Activated CD8-positive, alpha-beta T cell treated with anti-CD3 and anti-CD28 coated beads for 36 hours (primary cell): ENCODE measurements at regions of chr20 and their contacts with region 1.

Region 1: DNA sequence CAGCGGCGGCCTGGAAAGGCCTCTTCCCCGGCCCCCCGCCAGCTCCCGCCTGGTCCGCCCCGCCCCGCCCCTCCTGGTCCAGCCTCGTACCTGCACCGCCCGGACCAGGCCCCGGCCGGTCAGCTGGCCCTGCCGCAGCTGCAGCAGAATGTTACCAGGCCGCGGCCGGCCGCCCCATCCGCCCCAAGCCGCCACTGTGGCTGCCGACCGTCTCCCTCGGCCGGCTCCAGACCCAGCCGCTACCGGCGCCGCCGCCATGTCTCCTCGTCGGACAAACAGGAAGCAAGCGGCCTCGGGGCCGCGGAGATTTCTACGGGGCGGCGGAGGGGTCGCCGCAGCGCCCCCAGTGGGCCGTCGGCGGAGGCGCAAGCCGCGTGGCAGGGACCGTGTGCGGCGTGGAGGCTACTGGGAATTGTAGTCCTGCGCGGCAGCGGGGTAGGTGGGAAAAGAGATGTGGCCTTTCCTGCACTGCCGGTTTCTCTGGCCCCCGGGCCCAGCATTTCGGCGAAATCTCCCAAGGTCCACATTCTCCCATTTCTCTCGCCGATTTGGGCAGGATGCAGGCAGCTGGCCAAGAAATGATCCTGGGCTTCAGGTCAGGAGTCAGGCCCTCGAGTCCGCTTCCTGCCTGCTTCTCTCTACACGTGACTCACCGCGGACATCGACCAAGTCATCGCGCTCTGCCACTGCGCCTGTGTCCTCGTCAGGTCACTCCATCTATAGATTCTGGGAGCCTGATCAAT is at the start of gene TRPC4AP:
- DNase-seq: peak; percentile 90
- ATAC-seq: peak; percentile 94
- H3K4me3 Mint-ChIP-seq: peak within 1 kb of the TSS; percentile 84
- H3K27ac Mint-ChIP-seq: peak within 1 kb of the TSS; percentile 99
- H3K4me1 Mint-ChIP-seq: peaks cover 50% of the 10 kb centered on the region
- H3K27me3 Mint-ChIP-seq: no peaks in the 10 kb centered on the region
- CTCF ChIP-seq: peak; percentile 90
- total RNA-seq, gene TRPC4AP: 34.2 to 38.2 TPM

Region 2: GRCh38 chr20:35034145-35034544 is 58.5 kb before region 1 on chr20:
- CTCF ChIA-PET with region 1: interaction called, 13 read pairs
- POLR2A ChIA-PET with region 1: no interaction called
- intact Hi-C with region 1: no loop called
- DNase-seq: no peak
- ATAC-seq: no peak
- H3K4me3 Mint-ChIP-seq: no peak overlapping the region
- H3K27ac Mint-ChIP-seq: no peak overlapping the region
- H3K4me1 Mint-ChIP-seq: no peaks in the 10 kb centered on the region
- H3K27me3 Mint-ChIP-seq: no peaks in the 10 kb centered on the region
- CTCF ChIP-seq: no peak

Region 3: DNA sequence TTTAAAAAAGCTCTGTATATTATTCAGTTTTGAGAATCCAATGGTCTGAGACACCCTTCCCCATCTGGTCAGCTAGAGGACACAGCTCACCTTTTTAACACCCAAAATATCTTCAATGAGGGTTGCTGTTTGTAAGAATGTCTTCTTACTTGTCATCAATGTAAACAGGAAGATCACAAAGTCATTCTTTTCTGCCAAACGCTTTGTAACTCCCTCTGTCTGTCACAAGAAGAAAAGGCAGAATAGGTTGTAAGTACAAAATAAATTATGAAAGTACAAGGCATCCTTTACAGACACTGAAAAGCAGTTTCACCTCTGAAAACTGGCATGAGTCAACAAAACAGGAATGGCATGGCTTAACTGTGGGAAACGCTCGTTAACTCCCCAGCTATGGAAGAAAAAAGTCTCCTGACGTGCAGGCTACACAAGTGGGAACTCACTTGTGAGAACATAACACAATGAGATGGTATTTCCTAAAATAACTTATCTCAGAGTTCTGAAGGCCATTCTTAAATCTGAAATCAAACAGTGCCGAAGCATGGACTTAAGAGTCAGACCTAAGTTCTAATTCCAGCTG is 42.8 kb before region 1 on chr20:
- CTCF ChIA-PET with region 1: interaction called, 7 read pairs
- POLR2A ChIA-PET with region 1: interaction called, 11 read pairs
- intact Hi-C with region 1: no loop called
- DNase-seq: no peak
- ATAC-seq: no peak
- H3K4me3 Mint-ChIP-seq: no peak overlapping the region
- H3K27ac Mint-ChIP-seq: no peak overlapping the region
- H3K4me1 Mint-ChIP-seq: peaks cover 6% of the 10 kb centered on the region
- H3K27me3 Mint-ChIP-seq: no peaks in the 10 kb centered on the region
- CTCF ChIP-seq: no peak

Region 4: DNA sequence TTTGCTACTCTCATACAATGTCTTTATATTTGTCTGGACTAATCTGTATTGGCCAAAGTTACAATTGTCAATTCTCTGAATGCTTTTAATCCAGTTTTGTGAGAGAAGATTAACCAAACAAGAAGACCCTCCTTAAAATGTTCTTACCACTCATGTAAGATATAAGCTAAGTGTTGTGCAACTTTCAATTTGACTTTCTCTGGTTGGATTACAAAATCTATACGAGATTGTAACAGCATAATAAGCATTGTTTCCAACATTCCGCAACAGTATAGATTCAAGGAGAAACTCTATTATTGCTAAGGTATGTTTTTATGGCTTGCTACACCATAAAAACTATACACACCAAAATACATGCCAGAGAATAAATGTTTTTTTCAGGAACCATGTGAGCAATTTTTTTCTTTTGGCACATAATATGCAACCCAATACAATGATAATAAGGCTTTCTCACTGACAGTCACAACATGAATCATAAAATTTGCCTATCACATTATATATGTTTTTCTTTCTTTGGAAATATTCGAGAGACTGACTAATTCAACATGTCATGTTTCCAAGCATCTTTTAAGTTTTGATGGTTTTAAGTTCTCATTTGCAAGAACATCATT is 12.1 kb after region 1 on chr20:
- CTCF ChIA-PET with region 1: interaction called, 17 read pairs
- POLR2A ChIA-PET with region 1: no interaction called
- intact Hi-C with region 1: no loop called
- DNase-seq: no peak
- ATAC-seq: no peak
- H3K4me3 Mint-ChIP-seq: no peak overlapping the region
- H3K27ac Mint-ChIP-seq: no peak overlapping the region
- H3K4me1 Mint-ChIP-seq: no peaks in the 10 kb centered on the region
- H3K27me3 Mint-ChIP-seq: no peaks in the 10 kb centered on the region
- CTCF ChIP-seq: no peak

Region 5: DNA sequence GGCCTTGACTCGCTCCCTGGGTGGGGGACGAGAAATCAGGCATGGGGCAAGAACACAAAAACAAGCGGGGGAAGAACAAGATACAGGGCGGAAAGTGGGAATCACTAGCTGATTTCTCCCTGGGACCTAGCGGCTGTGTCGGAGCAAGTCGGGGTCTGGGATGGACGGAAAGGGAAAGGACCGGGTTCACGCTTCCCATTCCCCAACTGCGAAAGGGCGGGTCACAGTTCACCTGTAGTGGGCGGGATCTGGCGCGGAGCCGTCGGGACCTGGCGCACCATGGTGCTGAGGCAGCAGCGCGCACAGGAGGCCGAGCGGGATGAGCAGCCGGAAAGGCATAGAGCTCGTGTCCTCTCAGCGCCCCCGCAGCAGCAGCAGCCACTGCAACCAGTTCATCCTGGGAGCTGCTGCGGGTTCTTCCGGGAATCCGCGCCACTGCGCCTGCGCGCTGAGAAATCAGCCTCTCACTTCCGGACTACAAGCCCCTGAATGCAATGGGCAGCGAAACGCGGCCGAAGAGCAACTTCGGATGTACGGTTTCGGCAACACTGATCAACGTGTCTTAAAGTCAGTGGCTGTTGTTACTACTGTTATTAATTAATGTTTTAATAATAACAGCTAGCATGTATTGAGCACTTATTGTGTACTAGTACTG is 54.4 kb after region 1 on chr20 and contains the start of gene EDEM2:
- CTCF ChIA-PET with region 1: interaction called, 34 read pairs
- POLR2A ChIA-PET with region 1: interaction called, 8 read pairs
- intact Hi-C with region 1: loop called (anchors 10 kb)
- DNase-seq: peak; percentile 95
- ATAC-seq: peak; percentile 91
- H3K4me3 Mint-ChIP-seq: peak within 1 kb of the TSS; percentile 95
- H3K27ac Mint-ChIP-seq: peak within 1 kb of the TSS; percentile 90
- H3K4me1 Mint-ChIP-seq: peaks cover 27% of the 10 kb centered on the region
- H3K27me3 Mint-ChIP-seq: no peaks in the 10 kb centered on the region
- CTCF ChIP-seq: no peak
- total RNA-seq, gene EDEM2: 14.4 to 16.0 TPM

Region 6: DNA sequence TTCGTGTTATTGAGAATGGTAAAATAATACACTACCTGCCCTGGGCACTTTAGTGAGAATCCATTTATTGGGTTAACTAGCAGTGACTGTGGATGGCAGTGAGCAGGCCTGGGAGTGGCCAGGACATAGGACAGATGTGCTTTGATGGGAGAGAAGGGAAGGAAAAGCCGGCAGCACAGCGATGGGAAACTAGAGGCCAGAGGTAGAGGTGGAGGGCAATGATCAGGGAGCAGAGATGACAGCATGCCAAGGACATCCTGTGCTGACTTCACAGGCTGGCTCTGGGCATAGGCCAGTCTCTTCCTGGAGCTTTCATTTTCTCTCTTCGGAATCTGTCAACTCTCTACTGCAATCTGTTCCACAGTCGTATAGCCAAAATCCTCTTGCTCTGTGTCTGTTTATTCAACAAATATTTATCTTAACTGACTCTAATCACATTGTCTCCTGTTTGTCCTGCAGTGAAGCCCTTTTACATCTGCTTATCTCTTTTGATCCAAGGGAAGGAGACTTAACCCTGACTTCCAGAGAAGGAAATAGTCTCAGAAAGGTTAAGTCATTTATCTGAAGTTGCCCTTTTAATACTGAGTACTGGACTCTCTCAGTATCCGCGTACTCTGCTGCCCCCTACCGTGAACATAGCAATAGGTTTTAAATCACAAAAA is 115.4 kb after region 1 on chr20:
- CTCF ChIA-PET with region 1: interaction called, 48 read pairs
- POLR2A ChIA-PET with region 1: interaction called, 3 read pairs
- intact Hi-C with region 1: loop called (anchors 2 kb)
- DNase-seq: peak; percentile 89
- ATAC-seq: peak; percentile 91
- H3K4me3 Mint-ChIP-seq: no peak overlapping the region
- H3K27ac Mint-ChIP-seq: no peak overlapping the region
- H3K4me1 Mint-ChIP-seq: no peaks in the 10 kb centered on the region
- H3K27me3 Mint-ChIP-seq: no peaks in the 10 kb centered on the region
- CTCF ChIP-seq: peak; percentile 81

Region 7: GRCh38 chr20:35269055-35269781 is 176.5 kb after region 1 on chr20:
- CTCF ChIA-PET with region 1: interaction called, 10 read pairs
- POLR2A ChIA-PET with region 1: interaction called, 3 read pairs
- intact Hi-C with region 1: no loop called
- DNase-seq: peak; percentile 73
- ATAC-seq: peak; percentile 82
- H3K4me3 Mint-ChIP-seq: no peak overlapping the region
- H3K27ac Mint-ChIP-seq: no peak overlapping the region
- H3K4me1 Mint-ChIP-seq: peaks cover 2% of the 10 kb centered on the region
- H3K27me3 Mint-ChIP-seq: no peaks in the 10 kb centered on the region
- CTCF ChIP-seq: peak; percentile 71